ENCODE measurements at regions of chr11 and their contacts with region 1.

Region 1: DNA sequence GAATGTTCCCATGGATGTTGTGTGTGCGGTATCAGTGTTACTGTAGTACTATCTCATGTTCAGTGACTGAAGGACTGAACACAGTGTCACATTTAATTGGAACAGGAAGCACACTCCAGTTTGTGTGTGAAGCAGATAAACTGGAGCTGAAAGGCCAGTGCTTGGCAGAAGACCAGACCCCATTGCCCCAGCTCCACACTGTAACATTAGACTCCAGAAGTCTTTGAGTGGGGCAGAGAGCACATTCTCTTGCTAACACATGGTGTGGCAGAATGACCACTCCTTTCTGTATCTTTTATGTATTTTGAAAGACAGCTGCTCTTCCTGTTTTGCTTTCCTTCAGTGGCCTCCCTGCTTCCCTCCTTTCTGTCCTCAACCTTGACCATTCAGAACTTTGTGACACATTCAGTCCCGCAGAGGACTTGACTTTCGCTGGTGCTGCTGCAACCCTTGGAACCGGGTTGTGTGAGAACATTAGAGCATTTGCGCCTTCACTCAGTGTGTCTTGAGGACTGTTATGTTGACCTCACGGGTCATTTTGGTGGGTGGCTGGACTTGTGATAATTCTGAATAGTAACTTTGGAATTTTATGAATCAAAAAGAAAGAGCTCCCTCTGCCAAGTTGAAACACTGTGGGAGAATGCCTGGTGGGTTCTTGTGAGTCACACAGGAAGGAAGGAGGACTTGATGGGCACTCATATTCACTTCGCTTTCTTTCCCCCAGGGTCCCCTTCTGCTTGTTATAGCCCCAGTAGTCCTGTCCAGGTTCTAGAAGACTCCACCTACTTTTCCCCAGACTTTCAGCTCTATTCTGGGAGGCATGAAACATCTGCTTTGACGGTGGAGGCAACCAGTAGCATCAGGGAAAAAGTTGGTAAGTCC is 26.4 kb downstream of the AMOTL1 start:
- DNase-seq: peak; percentile 88 to 93
- ATAC-seq: peak; percentile 80 to 87
- H3K4me3 ChIP-seq: peak overlapping the region; percentile 26 to 46 (median 35)
- H3K27ac ChIP-seq: peak overlapping the region; percentile 89 to 91 (median 90)
- H3K4me1 ChIP-seq: peaks cover 88 to 89% of the 10 kb centered on the region in 2 donors
- H3K27me3 ChIP-seq: no peaks in the 10 kb centered on the region
- CTCF ChIP-seq: no peak
- POLR2A ChIP-seq: peak; percentile 6 to 36

Region 2: DNA sequence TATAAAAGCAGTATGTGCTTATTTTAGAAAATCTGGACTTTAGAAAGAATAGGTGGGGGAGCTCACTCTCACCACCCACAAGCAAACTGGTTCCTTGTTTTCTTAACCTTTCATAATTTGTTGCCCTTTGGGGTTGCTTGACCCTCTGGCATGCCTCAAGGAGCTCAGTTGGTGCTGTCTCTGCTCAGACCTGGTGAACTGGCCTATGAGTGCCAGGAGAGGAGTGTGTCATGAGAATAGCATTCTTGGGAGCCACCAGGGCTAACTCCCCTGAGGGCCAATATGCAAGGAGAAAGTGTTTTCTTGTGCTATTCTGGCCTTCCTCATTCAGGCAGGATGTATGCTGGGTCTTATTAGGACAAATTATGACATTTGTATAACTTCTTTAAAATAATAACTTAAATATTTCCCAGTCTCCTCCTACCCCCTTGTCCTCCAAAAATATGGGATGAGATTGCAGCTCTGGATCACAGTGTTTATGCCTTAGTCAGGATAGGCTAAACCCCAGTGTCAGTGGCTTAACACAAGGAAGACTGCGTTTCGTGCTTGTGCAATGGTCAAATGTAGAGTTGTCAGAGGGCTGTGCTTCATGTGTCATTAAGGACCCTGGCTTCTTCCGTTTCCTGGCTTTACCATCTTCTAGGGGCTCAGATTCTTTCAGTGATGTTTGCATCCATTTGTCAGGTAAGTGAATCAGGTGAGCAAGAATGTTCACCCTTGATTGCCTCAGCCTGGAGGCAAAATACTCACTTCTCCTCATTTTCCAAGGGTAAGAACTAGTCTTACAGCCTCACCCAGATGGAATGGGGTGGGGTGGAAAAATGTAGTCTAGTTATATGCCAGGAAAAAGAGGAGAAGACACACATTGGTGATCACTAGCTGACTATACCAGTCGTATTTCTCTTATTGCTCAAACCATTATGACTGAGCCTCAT is 47.1 kb before region 1 on chr11:
- in situ Hi-C with region 1: no loop called
- intact Hi-C with region 1: loop called (anchors 5 kb)
- DNase-seq: no peak
- ATAC-seq: no peak
- H3K4me3 ChIP-seq: no peak overlapping the region
- H3K27ac ChIP-seq: peak overlapping the region in 2 of 4 donors; percentile 5 to 16
- H3K4me1 ChIP-seq: peaks cover 35 to 44% of the 10 kb centered on the region in 2 donors
- H3K27me3 ChIP-seq: no peaks in the 10 kb centered on the region
- CTCF ChIP-seq: no peak
- POLR2A ChIP-seq: no peak

Region 3: DNA sequence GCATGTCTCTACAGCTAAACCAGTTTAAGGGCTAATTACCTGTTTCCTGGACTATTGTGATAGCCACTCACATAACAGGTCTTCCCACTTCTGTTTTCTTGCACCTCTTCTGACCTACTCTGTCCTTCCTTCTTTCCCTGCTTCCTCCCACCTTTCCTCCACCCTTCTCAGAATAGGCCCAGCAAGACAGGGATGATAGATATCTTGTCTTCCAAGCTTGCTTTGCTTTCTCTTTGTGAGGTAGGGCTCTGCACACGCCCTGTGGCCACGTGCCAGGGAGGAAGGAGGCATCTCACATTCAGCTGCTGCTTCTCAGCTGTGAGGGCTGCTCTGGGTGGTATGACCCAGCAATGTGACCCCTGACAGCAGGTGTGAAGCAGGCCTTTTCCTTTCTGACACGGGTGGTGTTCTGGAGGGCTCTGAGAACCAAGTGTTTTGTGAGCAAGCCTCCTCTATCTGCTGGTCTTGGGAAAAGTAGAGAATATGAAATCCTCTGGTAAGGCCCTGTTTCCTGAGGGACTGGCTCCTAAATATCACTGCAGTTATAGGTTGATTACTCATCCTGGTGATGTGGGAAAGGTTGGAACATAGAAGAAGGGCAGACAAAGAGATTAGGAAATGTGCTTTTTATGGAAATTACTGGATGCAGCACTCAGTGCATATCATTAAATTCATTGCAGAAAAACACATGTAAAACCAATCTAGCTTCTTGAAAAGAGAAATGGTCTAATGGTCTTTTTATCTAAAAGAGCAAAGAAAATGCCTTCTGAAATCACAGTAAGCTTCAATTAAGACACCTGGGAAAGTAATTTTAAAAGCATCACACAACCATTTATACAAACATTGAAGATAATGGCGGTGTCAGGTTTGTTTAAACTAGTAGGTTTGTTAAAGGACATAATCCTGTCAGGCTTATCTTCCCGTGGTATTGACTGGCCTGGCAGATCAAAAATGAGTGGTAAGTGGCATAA is 17.9 kb before region 1 on chr11:
- in situ Hi-C with region 1: no loop called
- intact Hi-C with region 1: no loop called
- DNase-seq: peak in 1 of 2 donors; percentile 65
- ATAC-seq: peak; percentile 45 to 71
- H3K4me3 ChIP-seq: peak overlapping the region in 2 of 4 donors; percentile 8 to 21
- H3K27ac ChIP-seq: peak overlapping the region; percentile 63 to 98 (median 74)
- H3K4me1 ChIP-seq: peaks cover 84 to 85% of the 10 kb centered on the region in 2 donors
- H3K27me3 ChIP-seq: no peaks in the 10 kb centered on the region
- CTCF ChIP-seq: no peak
- POLR2A ChIP-seq: no peak

Region 4: GRCh38 chr11:95108159-95108611 is 313.7 kb after region 1 on chr11:
- in situ Hi-C with region 1: no loop called
- intact Hi-C with region 1: loop called (anchors 10 kb)
- DNase-seq: peak; percentile 66 to 80
- ATAC-seq: peak; percentile 63 to 78
- H3K4me3 ChIP-seq: peak overlapping the region; percentile 48 to 53 (median 52)
- H3K27ac ChIP-seq: peak overlapping the region; percentile 85 to 94 (median 90)
- H3K4me1 ChIP-seq: peaks cover 81 to 96% of the 10 kb centered on the region in 2 donors
- H3K27me3 ChIP-seq: no peaks in the 10 kb centered on the region
- CTCF ChIP-seq: no peak
- POLR2A ChIP-seq: peak; percentile 2 to 29

Measured in gastrocnemius medialis (tissue), 4 donors.